Colonic mucosa (tissue), 4 donors: ENCODE measurements at regions of chr14 and their contacts with region 1.

Region 1: DNA sequence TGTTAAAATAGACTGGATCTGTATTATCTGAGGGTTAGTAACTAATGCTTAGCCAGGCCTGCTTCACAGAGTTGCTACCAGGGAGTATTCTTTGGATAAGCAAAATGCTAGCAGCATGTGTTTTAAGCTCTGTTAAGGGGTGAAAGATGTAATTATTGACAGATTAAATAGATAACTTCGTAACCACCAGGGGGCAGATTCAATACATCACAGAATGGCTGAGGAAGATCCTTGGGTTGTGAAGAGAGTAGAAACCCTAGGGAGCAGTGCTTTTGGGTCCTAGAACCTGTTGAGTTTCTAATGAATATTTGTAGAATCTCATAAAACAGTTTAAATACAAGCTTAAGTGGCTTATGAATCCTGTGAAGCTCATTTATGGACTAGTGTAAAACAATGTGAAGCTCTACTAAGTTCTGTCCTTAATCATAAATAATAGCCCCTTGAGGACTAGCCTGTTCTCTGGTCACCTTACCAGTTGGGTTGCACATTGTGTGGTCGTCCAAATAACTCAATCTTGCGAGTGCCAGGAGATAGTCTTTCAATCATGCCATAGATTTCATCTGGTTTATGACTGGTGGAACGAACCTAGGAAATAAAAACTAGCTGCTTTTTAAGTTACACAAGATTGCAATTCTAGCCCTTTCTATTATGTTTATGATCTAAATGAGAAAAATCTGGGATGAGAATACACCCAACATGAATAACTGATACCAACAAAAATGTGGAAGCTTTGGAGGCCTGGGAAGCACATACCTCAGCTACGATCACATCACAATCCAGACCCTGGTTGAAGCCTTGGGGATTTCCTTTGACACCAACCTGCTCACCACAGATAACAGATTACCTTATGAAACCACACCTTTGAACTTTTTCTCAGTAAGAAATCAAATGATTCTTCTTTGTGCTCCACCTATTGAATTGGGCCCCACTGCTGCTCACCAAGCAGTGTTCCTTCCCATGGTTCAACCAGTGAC is 12.3 kb downstream of the METTL3 start:
- DNase-seq: no peak
- H3K4me3 ChIP-seq: no peak overlapping the region
- H3K27ac ChIP-seq: no peak overlapping the region
- H3K4me1 ChIP-seq: no peaks in the 10 kb centered on the region
- H3K27me3 ChIP-seq: no peaks in the 10 kb centered on the region
- CTCF ChIP-seq: peak; percentile 44

Region 2: DNA sequence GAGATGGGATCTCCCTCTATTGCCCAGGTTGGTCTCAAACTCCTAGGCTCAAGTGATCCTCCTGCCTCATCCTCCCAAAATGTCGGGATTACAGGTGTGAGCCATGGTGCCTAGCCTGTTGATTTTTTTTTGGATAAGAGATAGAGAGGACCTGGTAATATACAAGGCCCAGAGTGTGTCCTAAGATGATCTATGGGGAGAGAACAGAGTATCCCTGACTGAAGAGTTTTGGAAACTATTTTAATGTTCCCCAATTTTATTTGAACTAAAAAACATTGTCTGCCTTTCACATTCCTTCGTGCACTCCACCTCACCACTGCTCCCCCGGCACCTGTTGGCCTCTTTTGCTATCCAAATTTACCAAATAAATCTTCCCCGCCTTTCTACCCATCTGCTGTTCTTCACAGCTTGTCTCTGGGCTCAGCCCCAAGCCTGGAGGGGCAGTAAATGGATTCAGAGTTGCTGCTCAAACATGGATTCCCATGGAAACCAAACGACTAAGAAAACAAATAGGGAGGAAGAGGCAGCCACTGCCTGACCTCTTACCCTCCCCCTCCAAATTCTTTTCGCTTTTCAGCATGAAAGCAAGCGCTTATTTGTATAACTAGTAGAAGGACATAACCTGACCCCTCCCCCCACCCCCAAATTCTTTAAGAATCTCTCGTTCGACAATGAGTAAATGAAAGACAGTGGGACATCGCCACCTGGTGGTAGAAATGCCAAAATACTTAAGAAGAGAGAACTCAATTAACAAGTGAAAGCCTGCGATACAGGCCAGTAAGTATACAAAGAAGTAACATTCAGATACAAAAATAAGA is 58.5 kb after region 1 on chr14:
- intact Hi-C with region 1: loop called (anchors 5 kb)
- DNase-seq: peak; percentile 82
- H3K4me3 ChIP-seq: no peak overlapping the region
- H3K27ac ChIP-seq: no peak overlapping the region
- H3K4me1 ChIP-seq: no peaks in the 10 kb centered on the region
- H3K27me3 ChIP-seq: no peaks in the 10 kb centered on the region
- CTCF ChIP-seq: peak; percentile 59